H1 (cell line): ENCODE measurements at regions of chr1 and their contacts with region 1.

Region 1: GRCh38 chr1:44294588-44295007 is 60.5 kb downstream of the ERI3 start:
- DNase-seq: peak in 1 of 2 experiments; percentile 61
- H3K4me3 ChIP-seq: no peak overlapping the region
- H3K27ac ChIP-seq: no peak overlapping the region
- H3K4me1 ChIP-seq: peaks cover 0 to 2% (median 0%) of the 10 kb centered on the region in 4 experiments; a peak in 1 of 7 replicates
- H3K27me3 ChIP-seq: no peaks in the 10 kb centered on the region
- CTCF ChIP-seq: peak; percentile 81 to 99 (median 89)
- EP300 ChIP-seq: no peak
- POLR2A ChIP-seq: no peak
- RAD21 ChIP-seq: peak; percentile 84 to 87

Region 2: GRCh38 chr1:44237721-44238457 is 56.7 kb before region 1 on chr1:
- CTCF ChIA-PET with region 1: interaction called, 96 read pairs
- POLR2A ChIA-PET with region 1: no interaction called
- DNase-seq: peak; percentile 69 to 91
- H3K4me3 ChIP-seq: peak overlapping the region in 1 of 4 experiments; percentile 31; a peak in 2 of 8 replicates
- H3K27ac ChIP-seq: no peak overlapping the region
- H3K4me1 ChIP-seq: peaks cover 0 to 26% (median 15%) of the 10 kb centered on the region in 4 experiments; a peak in 6 of 7 replicates
- H3K27me3 ChIP-seq: no peaks in the 10 kb centered on the region
- CTCF ChIP-seq: peak; percentile 70 to 86 (median 81)
- EP300 ChIP-seq: no peak
- POLR2A ChIP-seq: no peak
- RAD21 ChIP-seq: peak; percentile 58 to 60

Region 3: DNA sequence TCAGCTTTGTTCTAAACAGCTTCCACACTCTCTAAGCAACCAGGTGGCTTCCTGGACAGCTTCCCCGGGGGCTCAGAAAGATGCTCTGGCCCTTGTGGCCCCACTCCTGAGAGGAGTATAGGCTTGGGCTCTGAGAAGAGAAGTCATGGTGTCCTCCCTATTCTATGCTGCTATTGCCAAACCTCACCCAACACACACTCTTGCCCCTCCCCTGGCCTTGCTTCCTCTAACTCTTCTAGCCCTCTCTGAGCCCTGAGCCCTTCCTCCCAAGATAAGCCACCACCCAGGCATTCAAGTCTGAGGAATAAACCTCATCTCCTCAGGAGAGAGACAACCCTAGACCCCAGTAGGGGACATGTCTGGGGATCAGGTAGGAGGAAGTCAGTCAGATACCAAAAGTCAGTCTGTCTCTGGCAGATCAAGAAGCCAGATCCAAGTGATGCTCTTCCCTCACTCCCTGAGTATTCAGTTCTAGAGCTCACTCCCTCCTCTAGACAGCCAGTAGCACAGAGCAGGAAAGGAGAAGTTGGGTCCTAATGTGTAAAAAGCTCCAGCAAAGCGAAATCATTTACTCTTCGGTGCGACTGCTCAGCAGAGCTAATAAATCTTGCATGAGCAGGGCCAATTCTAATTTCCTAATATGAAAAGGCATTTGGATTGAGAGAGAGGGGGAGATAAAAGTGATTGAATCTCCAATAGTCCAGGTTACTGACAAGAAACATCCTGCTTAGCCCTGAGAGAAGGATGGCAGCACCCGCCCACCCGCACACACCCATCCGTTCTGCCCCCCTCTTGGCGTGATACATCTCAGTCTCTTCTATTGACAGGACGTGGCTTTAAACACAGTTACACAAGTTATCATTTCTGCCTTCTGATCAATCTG is 30.8 kb before region 1 on chr1:
- CTCF ChIA-PET with region 1: interaction called, 26 read pairs
- POLR2A ChIA-PET with region 1: no interaction called
- DNase-seq: no peak
- H3K4me3 ChIP-seq: no peak overlapping the region
- H3K27ac ChIP-seq: no peak overlapping the region
- H3K4me1 ChIP-seq: peaks cover 1 to 13% (median 8%) of the 10 kb centered on the region in 4 experiments; a peak in 5 of 7 replicates
- H3K27me3 ChIP-seq: no peaks in the 10 kb centered on the region
- CTCF ChIP-seq: no peak
- EP300 ChIP-seq: no peak
- POLR2A ChIP-seq: no peak
- RAD21 ChIP-seq: no peak

Region 4: DNA sequence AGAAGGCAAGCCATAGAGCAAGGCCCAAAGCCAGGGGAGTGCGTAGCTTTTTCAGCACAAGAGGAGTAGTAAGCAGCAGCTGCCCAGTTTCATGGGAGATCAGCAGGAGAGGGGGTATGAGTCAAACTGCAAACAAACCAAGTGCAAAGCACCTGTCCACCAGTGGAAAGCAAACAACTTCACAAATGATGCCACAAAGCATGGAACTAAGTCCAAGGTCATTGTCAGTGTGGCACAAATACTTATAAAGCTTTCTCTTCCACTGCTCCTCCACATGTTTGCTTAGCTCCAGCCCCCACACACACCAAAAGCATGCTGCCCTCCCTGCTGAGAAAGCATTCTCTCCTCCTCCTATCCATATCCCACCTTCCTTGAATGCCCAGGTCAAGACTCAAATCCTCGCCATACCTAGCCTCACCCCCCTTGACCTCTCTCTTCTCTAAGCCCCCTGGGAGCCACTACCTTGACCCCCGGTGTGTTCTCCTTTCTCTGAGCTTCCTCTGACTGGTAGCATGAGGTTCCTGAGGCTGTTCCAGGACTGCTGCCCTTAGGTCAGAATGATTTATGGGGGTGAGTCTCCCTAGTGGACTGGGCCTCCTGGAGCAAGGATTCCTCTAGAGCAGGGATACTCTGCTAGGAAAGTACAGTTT is 10.9 kb before region 1 on chr1:
- CTCF ChIA-PET with region 1: interaction called, 60 read pairs
- POLR2A ChIA-PET with region 1: interaction called, 3 read pairs
- DNase-seq: no peak
- H3K4me3 ChIP-seq: no peak overlapping the region
- H3K27ac ChIP-seq: no peak overlapping the region
- H3K4me1 ChIP-seq: no peaks in the 10 kb centered on the region
- H3K27me3 ChIP-seq: no peaks in the 10 kb centered on the region
- CTCF ChIP-seq: no peak
- EP300 ChIP-seq: no peak
- POLR2A ChIP-seq: no peak
- RAD21 ChIP-seq: no peak

Region 5: DNA sequence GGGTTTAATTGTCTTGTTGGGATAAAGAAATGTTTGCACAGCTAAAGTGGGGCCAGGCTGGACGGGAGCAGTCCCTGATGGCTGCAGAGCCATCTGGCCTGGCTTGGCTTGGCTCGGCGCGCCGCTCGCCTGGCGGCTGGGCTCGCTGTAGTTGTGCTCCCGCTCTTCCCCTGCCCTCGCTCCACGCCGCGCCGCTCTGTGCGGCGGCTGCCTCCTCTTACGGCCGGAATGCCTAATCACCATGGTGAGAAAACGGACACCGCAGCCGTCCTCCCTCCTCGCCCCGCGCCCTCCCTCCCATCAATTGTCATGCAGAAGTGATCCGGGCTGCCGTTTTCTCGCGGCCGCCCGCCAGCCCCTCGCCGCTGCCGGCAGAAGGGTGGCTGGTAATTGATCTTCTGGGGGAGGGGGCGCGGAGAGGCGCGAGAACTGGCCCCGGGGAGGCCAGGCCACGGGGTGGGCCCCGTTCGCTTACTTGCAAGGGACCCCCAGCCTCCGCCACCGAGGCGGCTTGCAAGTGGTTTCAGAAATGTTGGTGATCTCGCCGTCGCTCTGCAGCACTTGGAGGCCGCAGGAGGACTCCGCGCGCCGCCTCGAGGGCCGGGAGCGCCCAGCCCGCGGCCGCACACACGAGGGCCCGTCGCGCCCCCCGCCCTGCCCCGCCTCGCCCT is 122.9 kb after region 1 on chr1:
- CTCF ChIA-PET with region 1: no interaction called
- POLR2A ChIA-PET with region 1: no interaction called
- DNase-seq: peak; percentile 76 to 85
- H3K4me3 ChIP-seq: peak overlapping the region; percentile 44 to 69 (median 53)
- H3K27ac ChIP-seq: peak overlapping the region; percentile 17; the same call in 1 of the 2 replicates
- H3K4me1 ChIP-seq: peaks cover 8 to 26% (median 21%) of the 10 kb centered on the region in 4 experiments
- H3K27me3 ChIP-seq: peaks cover 0 to 10% (median 4%) of the 10 kb centered on the region in 4 experiments; a peak in 5 of 7 replicates
- CTCF ChIP-seq: no peak
- EP300 ChIP-seq: peak in 1 of 2 experiments; percentile 18; a peak in 1 of 3 replicates
- POLR2A ChIP-seq: no peak; a peak in 1 of 3 replicates
- RAD21 ChIP-seq: 0 out of 4 replicates have a peak, but pooled peaks have one; percentile 2 to 11

Region 6: GRCh38 chr1:44485229-44485933 is 190.8 kb after region 1 on chr1:
- CTCF ChIA-PET with region 1: interaction called, 10 read pairs
- POLR2A ChIA-PET with region 1: no interaction called
- DNase-seq: no peak
- H3K4me3 ChIP-seq: no peak overlapping the region
- H3K27ac ChIP-seq: no peak overlapping the region
- H3K4me1 ChIP-seq: peaks cover 6 to 17% (median 11%) of the 10 kb centered on the region in 4 experiments; a peak in 6 of 7 replicates
- H3K27me3 ChIP-seq: no peaks in the 10 kb centered on the region
- CTCF ChIP-seq: no peak
- EP300 ChIP-seq: no peak
- POLR2A ChIP-seq: no peak
- RAD21 ChIP-seq: no peak

Region 7: DNA sequence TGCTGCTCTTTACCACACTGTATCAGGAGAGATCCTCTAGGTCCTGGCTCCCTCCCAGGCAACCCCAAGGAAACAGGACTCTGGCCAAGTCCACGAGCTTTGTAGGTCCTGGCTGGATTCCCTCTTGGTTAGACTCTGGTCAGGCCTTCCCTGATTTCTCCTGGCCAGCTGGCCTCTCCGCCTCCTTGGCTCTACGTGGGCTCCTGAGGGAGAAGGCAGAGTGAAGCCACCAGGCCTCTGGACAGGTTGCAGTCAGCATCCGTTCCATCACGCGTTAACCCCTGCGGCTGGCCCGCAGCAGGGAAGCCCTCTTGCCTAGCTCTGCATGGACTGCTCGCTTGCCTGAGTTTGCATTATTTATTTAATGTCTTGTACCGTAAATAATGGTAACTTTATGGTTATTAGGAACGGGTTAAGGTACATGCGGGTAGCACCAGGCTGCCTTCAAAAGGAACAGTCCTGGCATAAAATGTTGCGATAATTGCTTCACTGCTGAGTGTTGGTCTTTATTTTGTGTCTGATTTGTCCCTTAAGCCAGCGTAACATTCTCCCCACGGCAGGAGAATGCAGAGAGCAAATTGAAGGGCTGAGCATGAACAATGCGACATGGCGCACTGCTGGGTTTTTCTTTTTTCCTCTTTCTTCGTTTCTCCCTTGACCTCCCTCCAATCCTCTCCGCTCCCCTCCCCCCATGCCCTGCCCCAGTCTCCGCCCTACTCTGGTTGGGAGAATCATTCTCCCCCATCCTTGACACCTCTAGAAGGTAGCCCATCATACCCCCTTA is 210.8 kb after region 1 on chr1:
- CTCF ChIA-PET with region 1: no interaction called
- POLR2A ChIA-PET with region 1: no interaction called
- DNase-seq: no peak
- H3K4me3 ChIP-seq: peak overlapping the region in 1 of 4 experiments; percentile 5; a peak in 1 of 8 replicates
- H3K27ac ChIP-seq: no peak overlapping the region
- H3K4me1 ChIP-seq: peaks cover 22 to 55% (median 43%) of the 10 kb centered on the region in 4 experiments
- H3K27me3 ChIP-seq: peaks cover 0 to 17% (median 11%) of the 10 kb centered on the region in 4 experiments; a peak in 5 of 7 replicates
- CTCF ChIP-seq: no peak
- EP300 ChIP-seq: no peak
- POLR2A ChIP-seq: no peak
- RAD21 ChIP-seq: no peak